OCI-LY7 (cell line): ENCODE measurements at regions of chr11 and their contacts with region 1.

Region 1: GRCh38 chr11:74185285-74185684 is 14.2 kb downstream of the PPME1 start:
- DNase-seq: no peak
- H3K4me3 ChIP-seq: no peak overlapping the region
- H3K27ac ChIP-seq: no peak overlapping the region
- H3K4me1 ChIP-seq: no peaks in the 10 kb centered on the region
- CTCF ChIP-seq: no peak

Region 2: GRCh38 chr11:74170694-74171629 is 14.3 kb before region 1 on chr11 and contains the starts of genes C2CD3 and PPME1:
- CTCF ChIA-PET with region 1: no interaction called
- POLR2A ChIA-PET with region 1: interaction called, 10 read pairs
- intact Hi-C with region 1: no loop called
- DNase-seq: peak; percentile 100
- H3K4me3 ChIP-seq: peak within 1 kb of the TSS; percentile 93
- H3K27ac ChIP-seq: peak within 1 kb of the TSS; percentile 75
- H3K4me1 ChIP-seq: peaks cover 30% of the 10 kb centered on the region
- CTCF ChIP-seq: 0 out of 2 replicates have a peak, but pooled peaks have one; percentile 33
- total RNA-seq, gene C2CD3: 24.9 and 29.2 TPM in 2 replicates
- total RNA-seq, gene PPME1: 17.3 and 28.8 TPM in 2 replicates